Testis (tissue), 5 donors: ENCODE measurements at regions of chr1 and their contacts with region 1.

Region 1: GRCh38 chr1:147172168-147172992 is at the start of gene PRKAB2:
- DNase-seq: peak; percentile 97
- H3K4me3 ChIP-seq: peak within 1 kb of the TSS; percentile 83 to 86
- H3K27ac ChIP-seq: peak within 1 kb of the TSS; percentile 96
- H3K4me1 ChIP-seq: peaks cover 23% of the 10 kb centered on the region
- H3K27me3 ChIP-seq: no peaks in the 10 kb centered on the region
- CTCF ChIP-seq: peak; percentile 92 to 95 (median 94)
- POLR2A ChIP-seq: peak; percentile 8
- total RNA-seq, gene PRKAB2: 14.6 to 20.7 TPM

Region 2: GRCh38 chr1:147225193-147225730 is 52.9 kb after region 1 on chr1 and contains the start of gene FMO5:
- intact Hi-C with region 1: loop called (anchors 5 kb)
- DNase-seq: peak; percentile 87
- H3K4me3 ChIP-seq: peak within 1 kb of the TSS; percentile 59 to 72
- H3K27ac ChIP-seq: peak within 1 kb of the TSS; percentile 76 to 86
- H3K4me1 ChIP-seq: peaks cover 5% of the 10 kb centered on the region
- H3K27me3 ChIP-seq: no peaks in the 10 kb centered on the region
- CTCF ChIP-seq: peak in 1 of 3 experiments; percentile 31
- POLR2A ChIP-seq: no peak
- total RNA-seq, gene FMO5: 6.4 to 9.8 TPM

Region 3: GRCh38 chr1:147242439-147243227 is 70.3 kb after region 1 on chr1 and contains the start of gene CHD1L:
- intact Hi-C with region 1: loop called (anchors 5 kb)
- DNase-seq: peak; percentile 97
- H3K4me3 ChIP-seq: peak within 1 kb of the TSS; percentile 82 to 96
- H3K27ac ChIP-seq: peak within 1 kb of the TSS; percentile 48 to 95
- H3K4me1 ChIP-seq: no peaks in the 10 kb centered on the region
- H3K27me3 ChIP-seq: no peaks in the 10 kb centered on the region
- CTCF ChIP-seq: peak; percentile 66 to 95 (median 85)
- POLR2A ChIP-seq: no peak
- total RNA-seq, gene CHD1L: 29.7 to 43.9 TPM